ENCODE measurements at regions of chr3 and their contacts with region 1.

Region 1: GRCh38 chr3:13648060-13649001 is 99.4 kb downstream of the FBLN2 start:
- DNase-seq: peak; percentile 95

Region 2: DNA sequence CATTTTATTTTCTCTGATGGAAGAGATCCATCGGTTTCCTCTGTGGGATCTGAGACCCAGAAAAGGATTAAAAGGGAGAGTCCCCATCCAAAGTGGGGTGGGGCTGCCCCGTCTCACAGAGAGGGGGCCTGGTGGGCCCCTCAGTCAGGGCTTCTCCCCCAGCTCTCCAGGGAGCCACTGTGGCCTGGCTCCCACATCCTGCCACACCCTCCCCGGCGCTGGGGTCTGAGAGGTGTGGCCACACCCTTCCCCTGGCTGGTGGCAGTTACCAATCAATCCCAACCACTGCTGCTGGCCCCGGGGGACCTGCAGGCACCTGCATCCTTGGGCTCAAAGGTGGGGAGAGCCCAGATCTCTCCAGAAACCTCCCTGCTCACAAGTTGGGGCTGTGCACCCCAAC is 413.3 kb before region 1 on chr3:
- intact Hi-C with region 1: no loop called
- DNase-seq: no peak

Region 3: DNA sequence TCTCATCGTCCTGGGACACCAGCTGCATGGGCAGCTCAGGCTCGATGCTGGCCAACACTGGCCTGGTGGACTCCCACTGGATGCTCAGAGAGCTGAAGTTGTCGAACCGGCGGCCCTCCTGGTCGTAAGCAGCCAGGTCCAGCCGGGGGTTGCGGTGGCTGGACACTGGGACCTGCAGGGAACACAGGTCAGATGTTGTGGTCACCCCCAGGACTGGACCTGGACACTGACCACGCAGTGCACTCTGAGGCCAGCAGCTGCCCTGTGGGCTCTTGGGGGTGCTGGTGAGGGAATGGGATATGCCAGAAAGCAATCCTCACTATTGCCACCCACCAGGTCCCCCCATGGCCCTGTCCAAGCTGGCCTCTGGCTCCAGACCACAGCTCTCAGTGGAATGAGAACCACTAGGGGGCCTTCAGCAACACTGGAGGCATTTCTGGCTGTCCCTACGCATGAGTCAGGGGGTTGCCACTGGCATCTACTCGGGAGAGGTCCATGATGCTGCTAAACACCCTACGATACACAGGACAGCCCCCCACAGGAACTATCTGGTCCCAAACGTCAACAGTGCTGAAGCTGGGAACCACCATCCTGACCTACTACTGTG is 294.3 kb before region 1 on chr3:
- intact Hi-C with region 1: no loop called
- DNase-seq: no peak

Region 4: DNA sequence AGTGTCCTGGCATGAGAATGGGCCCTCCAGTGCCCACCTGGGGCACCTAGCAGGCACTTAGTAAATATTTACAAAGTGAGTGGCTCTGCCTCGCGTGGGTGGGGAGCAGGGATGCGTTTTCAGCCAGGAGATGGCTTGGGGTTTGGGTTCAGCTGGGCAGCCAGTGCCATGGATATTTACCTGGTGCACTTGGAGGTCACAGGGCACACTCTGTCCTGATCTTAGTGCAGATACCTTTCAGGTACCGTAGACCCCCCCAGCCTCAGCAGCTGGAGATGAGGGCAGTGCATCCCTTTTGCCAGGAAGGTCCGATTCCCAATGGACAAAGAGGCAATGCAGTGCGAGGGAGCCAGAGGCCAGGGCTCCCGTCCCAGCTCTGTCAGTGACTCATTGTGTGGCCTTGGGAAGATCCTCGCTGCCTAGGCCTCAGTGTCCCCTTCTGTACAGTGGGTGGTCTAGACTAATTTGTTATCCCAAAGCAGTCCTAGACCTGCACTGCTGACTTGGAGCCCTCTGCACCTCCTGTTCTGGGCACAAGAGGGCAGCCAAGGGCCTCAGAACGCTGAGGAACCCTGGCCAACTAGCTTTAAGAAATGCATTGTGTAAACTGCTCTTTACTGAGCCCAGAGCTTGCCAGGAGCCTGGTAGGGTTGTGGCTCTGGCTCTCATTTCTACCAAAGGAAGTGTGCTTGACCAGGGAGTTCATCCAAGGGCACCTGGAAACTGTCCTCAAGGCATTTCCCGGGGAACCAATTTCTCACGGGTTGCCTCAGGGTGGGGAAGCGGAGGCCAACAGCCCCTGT is 152.2 kb before region 1 on chr3:
- intact Hi-C with region 1: loop called (anchors 2 kb)
- DNase-seq: peak; percentile 93

Region 5: DNA sequence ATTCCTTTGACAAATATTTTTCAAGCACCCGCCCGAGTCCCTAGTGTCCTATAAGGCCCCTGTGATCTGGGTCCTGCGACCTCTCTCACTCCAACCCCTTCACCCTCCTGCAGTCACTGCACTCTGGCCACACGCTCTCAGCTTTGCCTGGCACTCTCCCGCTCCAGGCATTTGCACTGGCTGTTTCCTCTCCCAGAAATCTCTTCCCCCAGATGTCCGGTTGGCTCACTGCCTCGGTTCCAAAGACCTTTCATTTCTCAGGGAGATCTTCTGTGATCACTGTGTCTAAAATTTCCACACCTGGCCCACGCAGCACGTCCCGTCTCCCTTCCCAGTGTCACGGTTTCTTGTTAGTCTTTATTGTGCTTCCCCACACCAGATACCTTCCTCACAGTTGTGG is 134.2 kb after region 1 on chr3:
- intact Hi-C with region 1: no loop called
- DNase-seq: peak; percentile 74

Region 6: GRCh38 chr3:14225421-14225820 is 577.1 kb after region 1 on chr3:
- intact Hi-C with region 1: loop called in 1 of 2 experiments (anchors 5 kb)
- DNase-seq: no peak

Measured in posterior vena cava (tissue), 2 donors.